Uterus (tissue), 4 donors: ENCODE measurements at regions of chr10 and their contacts with region 1.

Region 1: DNA sequence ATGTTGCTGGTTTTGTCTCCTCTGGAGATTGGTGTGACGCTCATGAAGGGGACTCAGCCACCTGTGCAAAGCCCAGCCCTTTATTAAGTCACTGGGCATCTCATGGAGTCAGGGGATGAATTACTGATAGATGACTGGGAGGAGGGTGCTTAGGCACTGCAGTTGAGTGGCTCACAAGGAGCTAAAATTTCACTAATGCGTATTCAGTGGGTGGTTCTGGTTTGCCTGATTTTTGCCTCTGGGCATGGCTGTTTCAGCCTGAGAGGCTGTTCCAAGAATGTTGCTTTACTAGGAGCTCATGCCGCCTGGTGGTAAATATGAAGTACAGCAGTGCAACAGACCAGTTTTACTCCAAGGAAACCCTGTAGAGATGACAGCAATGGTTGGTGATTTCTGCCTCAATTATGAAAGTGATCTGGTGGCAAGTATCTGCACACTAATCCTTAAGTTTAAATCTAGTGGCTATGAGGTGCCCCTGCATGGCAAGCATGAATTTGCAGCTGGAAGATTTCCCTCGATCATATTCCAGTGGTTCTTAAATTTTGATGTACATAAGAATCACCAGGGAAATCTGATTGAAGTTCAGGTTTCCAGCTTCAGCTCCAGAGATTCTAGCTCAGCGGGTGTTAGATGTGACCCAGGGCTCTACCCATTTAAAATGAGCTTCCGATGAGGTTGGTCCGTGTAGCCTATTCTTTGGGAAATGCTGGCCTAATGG is 19.9 kb downstream of the ACTA2 start:
- DNase-seq: peak; percentile 51 to 80
- H3K4me3 ChIP-seq: no peak overlapping the region
- H3K27ac ChIP-seq: peak overlapping the region; percentile 66 to 83
- H3K4me1 ChIP-seq: peaks cover 3 to 5% of the 10 kb centered on the region in 2 donors
- H3K27me3 ChIP-seq: no peaks in the 10 kb centered on the region
- CTCF ChIP-seq: peak; percentile 92 to 96 (median 94)
- POLR2A ChIP-seq: peak in 1 of 2 donors; percentile 25

Region 2: GRCh38 chr10:88986549-88987242 is 54.0 kb after region 1 on chr10:
- intact Hi-C with region 1: loop called (anchors 5 kb)
- DNase-seq: no peak
- H3K4me3 ChIP-seq: no peak overlapping the region
- H3K27ac ChIP-seq: peak overlapping the region; percentile 57 to 99
- H3K4me1 ChIP-seq: peaks cover 6% of the 10 kb centered on the region in 2 donors
- H3K27me3 ChIP-seq: no peaks in the 10 kb centered on the region
- CTCF ChIP-seq: peak; percentile 75 to 85 (median 81)
- POLR2A ChIP-seq: no peak